ENCODE measurements at regions of chr1 and their contacts with region 1.

Region 1: GRCh38 chr1:32215629-32216480 is 6.3 kb downstream of the TMEM234 start:
- DNase-seq: peak; percentile 79
- H3K4me3 ChIP-seq: no peak overlapping the region; a peak in 1 of 4 replicates
- H3K27ac ChIP-seq: 0 out of 4 replicates have a peak overlapping the region, but pooled peaks of 1 of the 2 experiments have one; percentile 12
- H3K4me1 ChIP-seq: peaks cover 0 to 5% of the 10 kb centered on the region in 2 experiments; a peak in 1 of 4 replicates
- H3K27me3 ChIP-seq: no peaks in the 10 kb centered on the region
- CTCF ChIP-seq: peak; percentile 84
- EP300 ChIP-seq: no peak
- RAD21 ChIP-seq: peak; percentile 75

Region 2: GRCh38 chr1:32200226-32201010 is 15.4 kb before region 1 on chr1 and contains the start of gene CCDC28B:
- CTCF ChIA-PET with region 1: interaction called, 39 read pairs
- POLR2A ChIA-PET with region 1: interaction called, 15 read pairs
- DNase-seq: peak; percentile 86
- H3K4me3 ChIP-seq: peak within 1 kb of the TSS; percentile 69 to 75
- H3K27ac ChIP-seq: peak within 1 kb of the TSS; percentile 77 to 91
- H3K4me1 ChIP-seq: peaks cover 22 to 36% of the 10 kb centered on the region in 2 experiments; a peak in 3 of 4 replicates
- H3K27me3 ChIP-seq: no peaks in the 10 kb centered on the region
- CTCF ChIP-seq: no peak
- EP300 ChIP-seq: no peak
- RAD21 ChIP-seq: no peak
- polyA plus RNA-seq, gene CCDC28B: 18.8 and 26.3 TPM in 2 replicates

Region 3: DNA sequence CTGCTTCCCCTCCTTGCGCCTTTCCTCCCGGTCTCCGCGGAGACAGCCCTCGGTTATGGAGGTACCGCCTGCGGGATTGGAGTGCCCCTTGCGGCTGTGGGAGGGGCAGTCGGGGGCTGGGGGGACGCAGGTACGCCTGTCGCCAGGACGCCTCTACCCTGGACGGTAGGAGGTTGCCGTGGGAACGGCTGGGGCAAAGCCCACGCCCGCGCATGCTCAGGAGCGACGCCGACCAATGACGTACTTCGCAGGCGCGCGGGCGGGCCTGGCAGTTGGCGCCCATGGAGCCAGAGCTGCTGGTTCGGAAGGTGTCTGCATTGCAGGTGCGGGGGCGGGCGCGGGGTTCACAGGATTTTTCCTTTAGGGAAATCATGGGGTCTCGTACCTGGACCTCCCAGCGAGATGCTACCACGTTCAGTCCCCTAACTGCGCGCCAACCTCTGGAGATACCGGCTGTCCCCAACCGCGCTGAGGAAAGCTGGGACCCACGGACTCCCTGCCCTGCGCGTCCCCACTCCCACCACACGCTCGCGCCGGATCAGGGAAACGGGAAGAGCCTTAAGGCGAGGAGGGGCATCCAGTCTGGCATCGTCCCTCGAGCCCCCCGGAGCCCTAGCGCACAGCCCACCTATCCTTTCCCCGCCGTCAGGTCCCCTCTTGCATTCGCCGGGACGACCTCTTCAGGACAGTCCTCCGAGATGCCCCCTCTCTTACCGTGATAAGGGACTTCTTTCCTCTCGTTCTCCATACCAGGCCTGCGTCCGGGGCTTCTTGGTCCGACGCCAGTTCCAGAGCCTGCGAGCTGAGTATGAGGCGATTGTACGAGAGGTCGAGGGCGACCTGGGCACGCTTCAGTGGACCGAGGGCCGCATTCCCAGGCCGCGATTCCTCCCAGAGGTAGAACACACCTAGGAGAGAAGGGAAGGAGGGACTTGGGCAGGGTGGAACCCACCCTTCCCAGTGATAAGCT is 10.2 kb before region 1 on chr1 and contains the start of gene IQCC:
- CTCF ChIA-PET with region 1: interaction called, 39 read pairs
- POLR2A ChIA-PET with region 1: interaction called, 15 read pairs
- DNase-seq: peak; percentile 96
- H3K4me3 ChIP-seq: peak within 1 kb of the TSS; percentile 65 to 89
- H3K27ac ChIP-seq: peak within 1 kb of the TSS; percentile 6 to 62; a peak in 2 of 4 replicates
- H3K4me1 ChIP-seq: peaks cover 0 to 36% of the 10 kb centered on the region in 2 experiments; a peak in 2 of 4 replicates
- H3K27me3 ChIP-seq: no peaks in the 10 kb centered on the region
- CTCF ChIP-seq: no peak
- EP300 ChIP-seq: no peak
- RAD21 ChIP-seq: no peak
- polyA plus RNA-seq, gene IQCC: 2.4 and 2.9 TPM in 2 replicates

Region 4: GRCh38 chr1:32240140-32240951 is 24.5 kb after region 1 on chr1:
- CTCF ChIA-PET with region 1: interaction called, 24 read pairs
- POLR2A ChIA-PET with region 1: interaction called, 10 read pairs
- DNase-seq: peak; percentile 89
- H3K4me3 ChIP-seq: peak overlapping the region; percentile 51 to 57
- H3K27ac ChIP-seq: no peak overlapping the region; a peak in 1 of 4 replicates
- H3K4me1 ChIP-seq: peaks cover 12 to 13% of the 10 kb centered on the region in 2 experiments; a peak in 2 of 4 replicates
- H3K27me3 ChIP-seq: no peaks in the 10 kb centered on the region
- CTCF ChIP-seq: peak; percentile 24
- EP300 ChIP-seq: no peak
- RAD21 ChIP-seq: peak; percentile 27

Region 5: DNA sequence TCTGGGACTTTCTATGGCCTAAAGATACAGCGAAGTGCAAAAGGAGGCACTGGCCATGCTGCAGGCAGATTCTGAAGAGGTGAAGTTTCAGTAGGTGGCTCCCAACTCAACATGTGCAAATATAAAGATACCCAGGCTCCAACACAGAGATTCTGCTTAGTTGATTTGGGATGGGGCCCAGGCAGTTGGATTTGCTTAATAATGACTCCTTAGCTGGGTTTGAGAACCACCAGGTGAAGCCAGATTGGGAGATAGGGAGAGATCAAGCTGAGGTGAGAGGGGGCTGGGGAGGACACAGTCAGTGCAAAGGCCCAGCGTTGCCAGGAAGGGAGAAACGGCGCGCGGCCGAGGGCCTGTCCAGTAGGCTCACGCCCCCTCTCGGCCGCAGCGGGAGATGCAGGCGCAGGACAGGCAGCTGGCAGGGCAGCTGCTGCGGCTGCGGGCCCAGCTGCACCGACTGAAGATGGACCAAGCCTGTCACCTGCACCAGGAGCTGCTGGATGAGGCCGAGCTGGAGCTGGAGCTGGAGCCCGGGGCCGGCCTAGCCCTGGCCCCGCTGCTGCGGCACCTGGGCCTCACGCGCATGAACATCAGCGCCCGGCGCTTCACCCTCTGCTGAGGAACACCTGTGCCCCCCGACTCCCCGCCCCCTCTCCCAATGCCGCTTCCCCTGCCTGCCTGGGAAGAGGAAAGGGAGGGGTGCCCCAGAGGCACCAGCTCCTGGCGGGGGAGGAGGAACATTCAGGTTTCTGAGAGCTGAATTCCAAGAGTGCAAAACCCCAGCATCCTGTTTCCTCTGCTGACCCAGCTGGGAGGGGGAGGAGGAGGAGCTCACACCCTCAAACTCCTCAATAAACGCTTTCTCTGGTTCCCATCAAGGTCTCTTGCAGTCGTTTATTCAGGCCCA is 32.4 kb after region 1 on chr1:
- CTCF ChIA-PET with region 1: interaction called, 45 read pairs
- POLR2A ChIA-PET with region 1: no interaction called
- DNase-seq: peak; percentile 91
- H3K4me3 ChIP-seq: peak overlapping the region in 1 of 2 experiments; percentile 47; a peak in 1 of 4 replicates
- H3K27ac ChIP-seq: no peak overlapping the region
- H3K4me1 ChIP-seq: peaks cover 2 to 10% of the 10 kb centered on the region in 2 experiments; a peak in 3 of 4 replicates
- H3K27me3 ChIP-seq: no peaks in the 10 kb centered on the region
- CTCF ChIP-seq: peak; percentile 74
- EP300 ChIP-seq: no peak
- RAD21 ChIP-seq: peak; percentile 67

Region 6: GRCh38 chr1:32335790-32336590 is 120.1 kb after region 1 on chr1 and contains the start of gene MARCKSL1:
- CTCF ChIA-PET with region 1: interaction called, 4 read pairs
- POLR2A ChIA-PET with region 1: interaction called, 11 read pairs
- DNase-seq: peak; percentile 96
- H3K4me3 ChIP-seq: peak within 1 kb of the TSS; percentile 84 to 92
- H3K27ac ChIP-seq: peak within 1 kb of the TSS; percentile 36 to 81; a peak in 3 of 4 replicates
- H3K4me1 ChIP-seq: peaks cover 8 to 31% of the 10 kb centered on the region in 2 experiments; a peak in 3 of 4 replicates
- H3K27me3 ChIP-seq: no peaks in the 10 kb centered on the region
- CTCF ChIP-seq: no peak
- EP300 ChIP-seq: no peak
- RAD21 ChIP-seq: no peak
- polyA plus RNA-seq, gene MARCKSL1: 254 and 275 TPM in 2 replicates

Region 7: DNA sequence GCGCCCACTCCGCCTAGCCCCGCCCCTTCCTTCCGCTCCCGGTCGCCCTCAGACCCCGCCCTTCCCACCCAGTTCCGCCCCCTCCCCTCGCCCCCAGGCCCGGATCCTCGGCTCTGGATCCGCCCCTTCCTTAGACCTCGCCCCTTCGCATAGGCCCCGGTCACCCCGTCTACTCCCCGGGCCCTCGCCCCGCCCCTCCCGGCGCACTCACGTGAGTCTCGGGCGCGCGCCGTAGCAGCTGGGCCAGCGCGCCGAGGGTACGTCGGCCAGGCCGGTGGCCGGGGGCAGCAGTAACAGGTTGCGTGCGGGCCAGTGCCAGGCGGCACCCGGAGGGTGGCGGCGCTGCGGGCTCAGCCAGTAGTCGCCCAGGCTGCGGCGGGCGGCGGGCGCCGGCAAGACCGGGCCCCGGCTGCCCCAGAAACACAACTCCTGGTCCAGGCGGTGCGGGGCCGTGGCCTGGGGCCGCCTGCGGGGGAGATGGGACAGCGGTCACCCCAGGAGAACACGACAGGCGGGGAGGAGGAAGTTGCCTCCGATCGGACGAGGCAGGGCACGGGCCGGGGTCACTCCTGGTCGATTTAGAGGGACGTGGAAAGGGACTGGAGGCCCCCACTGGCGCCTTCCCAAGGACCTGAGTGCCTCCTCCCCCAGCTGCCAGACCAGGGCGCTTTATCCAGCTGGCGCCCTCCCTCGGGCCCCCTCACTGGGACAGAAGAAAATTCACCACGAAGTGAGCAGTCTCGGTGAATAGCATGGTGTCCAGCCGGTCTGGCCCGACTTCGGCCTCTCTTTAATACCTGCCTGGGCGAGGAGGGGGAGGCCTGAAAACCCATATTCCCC is 135.8 kb after region 1 on chr1:
- CTCF ChIA-PET with region 1: interaction called, 10 read pairs
- POLR2A ChIA-PET with region 1: no interaction called
- DNase-seq: peak; percentile 100
- H3K4me3 ChIP-seq: peak overlapping the region; percentile 62 to 84
- H3K27ac ChIP-seq: peak overlapping the region; percentile 79 to 90
- H3K4me1 ChIP-seq: peaks cover 4 to 9% of the 10 kb centered on the region in 2 experiments; a peak in 2 of 4 replicates
- H3K27me3 ChIP-seq: no peaks in the 10 kb centered on the region
- CTCF ChIP-seq: peak; percentile 24; the same call in 1 of the 2 replicates
- EP300 ChIP-seq: no peak
- RAD21 ChIP-seq: no peak